Panc1 (cell line): ENCODE measurements at regions of chr18 and their contacts with region 1.

Region 1: DNA sequence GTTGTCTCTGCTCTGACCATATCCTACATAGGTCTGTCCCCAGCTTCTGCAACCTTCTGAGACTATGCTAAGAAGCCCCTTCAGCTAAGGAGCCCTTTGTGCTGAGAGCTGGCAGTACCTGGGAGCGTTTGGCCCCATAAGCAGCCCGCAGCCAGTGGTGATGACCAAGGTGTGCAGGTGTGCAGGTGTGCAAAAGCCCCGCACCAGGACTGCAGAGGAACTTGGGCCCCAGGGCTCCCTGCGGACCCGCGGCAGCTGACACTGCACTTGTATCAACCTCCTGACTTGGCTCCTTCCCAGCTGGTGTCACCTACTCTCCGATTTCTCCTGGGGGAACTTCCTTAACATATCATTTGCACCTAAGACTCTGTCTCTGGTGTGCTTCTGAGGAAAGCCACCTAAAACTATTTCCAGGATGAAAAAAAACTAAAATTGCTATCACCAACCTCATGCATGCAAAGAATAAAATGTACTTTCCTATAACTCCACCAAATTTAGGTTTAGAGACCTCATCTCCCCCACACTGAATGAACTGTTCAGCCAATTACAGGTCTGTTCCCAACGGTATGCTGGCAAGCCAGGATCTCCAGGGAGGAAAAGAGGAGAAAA is 16.1 kb upstream of the GNAL start:
- DNase-seq: no peak
- ATAC-seq: no peak
- H3K4me3 ChIP-seq: no peak overlapping the region
- H3K27ac ChIP-seq: no peak overlapping the region
- H3K4me1 ChIP-seq: no peaks in the 10 kb centered on the region
- H3K27me3 ChIP-seq: peaks cover 10% of the 10 kb centered on the region
- CTCF ChIP-seq: no peak

Region 2: GRCh38 chr18:11541202-11541601 is 131.7 kb before region 1 on chr18:
- CTCF ChIA-PET with region 1: no interaction called
- POLR2A ChIA-PET with region 1: no interaction called
- in situ Hi-C with region 1: no loop called
- intact Hi-C with region 1: no loop called
- DNase-seq: no peak
- ATAC-seq: no peak
- H3K4me3 ChIP-seq: no peak overlapping the region
- H3K27ac ChIP-seq: no peak overlapping the region
- H3K4me1 ChIP-seq: no peaks in the 10 kb centered on the region
- H3K27me3 ChIP-seq: no peaks in the 10 kb centered on the region
- CTCF ChIP-seq: no peak

Region 3: GRCh38 chr18:11925800-11926481 is 253.0 kb after region 1 on chr18:
- CTCF ChIA-PET with region 1: interaction called, 12 read pairs
- POLR2A ChIA-PET with region 1: no interaction called
- in situ Hi-C with region 1: no loop called
- intact Hi-C with region 1: no loop called
- DNase-seq: no peak
- ATAC-seq: no peak
- H3K4me3 ChIP-seq: no peak overlapping the region
- H3K27ac ChIP-seq: no peak overlapping the region
- H3K4me1 ChIP-seq: no peaks in the 10 kb centered on the region
- H3K27me3 ChIP-seq: no peaks in the 10 kb centered on the region
- CTCF ChIP-seq: no peak